Naive thymus-derived CD4-positive, alpha-beta T cell (primary cell): ENCODE measurements at regions of chr1 and their contacts with region 1.

Region 1: DNA sequence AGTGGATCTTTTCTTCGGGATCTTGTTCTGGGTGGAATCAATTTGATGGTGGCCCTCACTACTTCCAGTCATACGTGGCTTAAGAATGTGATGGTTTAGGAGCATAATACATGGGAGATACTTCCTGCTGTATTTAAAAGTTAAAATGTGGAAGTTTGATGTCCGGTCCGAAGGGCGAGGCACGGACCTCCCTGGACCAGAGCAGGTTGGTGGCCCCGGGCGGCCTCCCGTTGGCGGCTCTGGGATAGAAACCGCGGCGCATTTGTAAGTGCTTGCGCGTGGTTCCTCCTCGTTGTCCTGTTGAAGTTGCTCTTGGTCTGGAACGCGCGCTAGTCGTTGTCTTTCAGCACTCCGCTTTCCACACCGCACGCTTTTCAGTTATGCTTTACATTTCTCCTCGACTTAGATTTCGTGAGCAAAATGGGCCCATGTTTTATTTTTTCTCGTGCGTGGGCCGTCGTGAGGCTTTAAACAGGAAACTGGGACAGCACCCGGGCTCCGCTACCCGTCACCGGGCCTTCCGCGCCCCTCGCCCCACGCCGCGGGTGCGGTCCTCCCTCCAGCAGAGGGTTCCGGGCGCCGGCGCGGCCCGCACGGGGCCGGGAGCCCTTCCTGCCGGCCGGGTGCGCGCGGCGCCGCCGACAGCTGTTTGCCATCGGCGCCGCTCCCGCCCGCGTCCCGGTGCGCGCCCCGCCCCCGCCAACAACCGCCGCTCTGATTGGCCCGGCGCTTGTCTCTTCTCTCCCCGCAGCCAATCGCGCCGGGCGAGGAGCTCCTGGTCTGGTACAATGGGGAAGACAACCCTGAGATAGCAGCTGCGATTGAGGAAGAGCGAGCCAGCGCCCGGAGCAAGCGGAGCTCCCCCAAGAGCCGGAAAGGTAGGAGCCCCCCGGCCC is 48.9 kb downstream of the PRDM2 start:
- DNase-seq: peak; percentile 94 to 97 (median 96)
- ATAC-seq: peak; percentile 95
- H3K4me3 ChIP-seq: peak overlapping the region; percentile 78
- H3K4me3 Mint-ChIP-seq: peak overlapping the region; percentile 90 to 98 (median 94)
- H3K27ac ChIP-seq: peak overlapping the region; percentile 83
- H3K27ac Mint-ChIP-seq: peak overlapping the region; percentile 91 to 97 (median 96)
- H3K4me1 ChIP-seq: peaks cover 36 to 43% of the 10 kb centered on the region in 2 donors
- H3K4me1 Mint-ChIP-seq: peaks cover 31 to 67% (median 54%) of the 10 kb centered on the region in 7 donors
- H3K27me3 ChIP-seq: no peaks in the 10 kb centered on the region
- H3K27me3 Mint-ChIP-seq: no peaks in the 10 kb centered on the region

Region 2: GRCh38 chr1:13651279-13651678 is 97.6 kb before region 1 on chr1:
- CTCF ChIA-PET with region 1: no interaction called
- POLR2A ChIA-PET with region 1: no interaction called
- intact Hi-C with region 1: no loop called
- DNase-seq: no peak
- ATAC-seq: no peak
- H3K4me3 ChIP-seq: no peak overlapping the region
- H3K4me3 Mint-ChIP-seq: no peak overlapping the region
- H3K27ac ChIP-seq: no peak overlapping the region
- H3K27ac Mint-ChIP-seq: no peak overlapping the region
- H3K4me1 ChIP-seq: no peaks in the 10 kb centered on the region
- H3K4me1 Mint-ChIP-seq: no peaks in the 10 kb centered on the region
- H3K27me3 ChIP-seq: no peaks in the 10 kb centered on the region
- H3K27me3 Mint-ChIP-seq: peaks cover 11 to 34% (median 19%) of the 10 kb centered on the region in 5 donors

Region 3: GRCh38 chr1:13699936-13700520 is 48.8 kb before region 1 on chr1 and contains the start of gene PRDM2:
- CTCF ChIA-PET with region 1: interaction called, 4 read pairs
- POLR2A ChIA-PET with region 1: interaction called, 18 read pairs
- intact Hi-C with region 1: loop called (anchors 1 kb)
- DNase-seq: peak; percentile 53 to 76 (median 69)
- ATAC-seq: peak; percentile 67
- H3K4me3 ChIP-seq: peak within 1 kb of the TSS; percentile 90
- H3K4me3 Mint-ChIP-seq: peak within 1 kb of the TSS; percentile 93 to 100 (median 98)
- H3K27ac ChIP-seq: peak within 1 kb of the TSS; percentile 96
- H3K27ac Mint-ChIP-seq: peak within 1 kb of the TSS; percentile 95 to 99 (median 98)
- H3K4me1 ChIP-seq: peaks cover 27% of the 10 kb centered on the region in 2 donors
- H3K4me1 Mint-ChIP-seq: peaks cover 31 to 66% (median 53%) of the 10 kb centered on the region in 7 donors
- H3K27me3 ChIP-seq: no peaks in the 10 kb centered on the region
- H3K27me3 Mint-ChIP-seq: peaks cover 0 to 9% (median 0%) of the 10 kb centered on the region in 5 donors
- total RNA-seq, gene PRDM2: 58.3 to 142 (median 127) TPM

Region 4: GRCh38 chr1:13764588-13765332 is 15.9 kb after region 1 on chr1:
- CTCF ChIA-PET with region 1: no interaction called
- POLR2A ChIA-PET with region 1: interaction called, 7 read pairs
- intact Hi-C with region 1: loop called in 1 of 2 experiments (anchors 2 kb)
- DNase-seq: peak in 1 of 9 donors; percentile 12
- ATAC-seq: peak; percentile 47
- H3K4me3 ChIP-seq: no peak overlapping the region
- H3K4me3 Mint-ChIP-seq: peak overlapping the region in 5 of 10 donors; percentile 2 to 41 (median 13)
- H3K27ac ChIP-seq: no peak overlapping the region
- H3K27ac Mint-ChIP-seq: peak overlapping the region in 6 of 9 donors; percentile 17 to 56 (median 40)
- H3K4me1 ChIP-seq: peaks cover 39 to 50% of the 10 kb centered on the region in 2 donors
- H3K4me1 Mint-ChIP-seq: peaks cover 50 to 89% (median 85%) of the 10 kb centered on the region in 7 donors
- H3K27me3 ChIP-seq: no peaks in the 10 kb centered on the region
- H3K27me3 Mint-ChIP-seq: no peaks in the 10 kb centered on the region